ENCODE measurements at regions of chr3 and their contacts with region 1.

Region 1: GRCh38 chr3:111955876-111956275 is 22.9 kb upstream of the ABHD10 start:
- DNase-seq: no peak
- H3K4me3 ChIP-seq: no peak overlapping the region
- H3K27ac ChIP-seq: no peak overlapping the region
- H3K4me1 ChIP-seq: no peaks in the 10 kb centered on the region
- H3K27me3 ChIP-seq: no peaks in the 10 kb centered on the region
- CTCF ChIP-seq: no peak; the same call in 1 of the 2 replicates

Region 2: GRCh38 chr3:111803123-111803593 is 152.7 kb before region 1 on chr3:
- CTCF ChIA-PET with region 1: no interaction called
- POLR2A ChIA-PET with region 1: no interaction called
- intact Hi-C with region 1: no loop called
- DNase-seq: peak; percentile 89 to 98
- H3K4me3 ChIP-seq: no peak overlapping the region
- H3K27ac ChIP-seq: peak overlapping the region; percentile 95
- H3K4me1 ChIP-seq: peaks cover 43% of the 10 kb centered on the region
- H3K27me3 ChIP-seq: no peaks in the 10 kb centered on the region
- CTCF ChIP-seq: no peak

Region 3: DNA sequence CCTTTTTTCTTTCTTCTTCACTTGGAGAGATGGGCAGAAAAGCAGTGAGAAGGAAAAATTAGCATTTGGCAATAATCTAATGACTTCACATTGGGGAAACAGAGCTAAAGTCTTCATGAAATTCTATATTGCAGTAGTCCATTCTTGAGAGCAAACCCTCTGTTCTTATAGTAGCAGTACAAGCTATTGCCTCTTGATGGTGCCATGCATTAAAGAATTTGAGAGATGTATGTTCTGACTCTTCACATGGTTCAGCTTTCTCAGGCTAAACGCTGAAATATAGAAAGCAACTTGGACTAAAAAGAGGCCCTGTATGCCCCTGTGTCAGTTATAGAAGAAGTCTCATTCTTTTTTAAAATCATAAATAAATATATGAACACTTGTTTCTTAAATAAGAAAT is 60.8 kb before region 1 on chr3:
- CTCF ChIA-PET with region 1: interaction called, 11 read pairs
- POLR2A ChIA-PET with region 1: no interaction called
- intact Hi-C with region 1: no loop called
- DNase-seq: peak in 1 of 2 experiments; percentile 63
- H3K4me3 ChIP-seq: no peak overlapping the region
- H3K27ac ChIP-seq: peak overlapping the region; percentile 4; the same call in 1 of the 2 replicates
- H3K4me1 ChIP-seq: 0 out of 2 replicates have a peak, but pooled peaks cover 4% of the 10 kb centered on the region
- H3K27me3 ChIP-seq: no peaks in the 10 kb centered on the region
- CTCF ChIP-seq: peak; percentile 77

Measured in PC-9 (cell line).